Endothelial cell of umbilical vein (primary cell): ENCODE measurements at regions of chr11 and their contacts with region 1.

Region 1: GRCh38 chr11:125345421-125346178 is 150.5 kb downstream of the FEZ1 start:
- DNase-seq: peak; percentile 67
- H3K4me3 ChIP-seq: no peak overlapping the region
- H3K27ac ChIP-seq: no peak overlapping the region
- H3K4me1 ChIP-seq: no peaks in the 10 kb centered on the region
- H3K27me3 ChIP-seq: no peaks in the 10 kb centered on the region
- CTCF ChIP-seq: peak; percentile 84 to 90
- POLR2A ChIP-seq: no peak

Region 2: GRCh38 chr11:125141686-125142535 is 203.7 kb before region 1 on chr11:
- CTCF ChIA-PET with region 1: interaction called, 45 read pairs
- POLR2A ChIA-PET with region 1: no interaction called
- dilution Hi-C with region 1: no loop called
- intact Hi-C with region 1: loop called (anchors 1 kb)
- DNase-seq: peak; percentile 52
- H3K4me3 ChIP-seq: no peak overlapping the region
- H3K27ac ChIP-seq: no peak overlapping the region
- H3K4me1 ChIP-seq: no peaks in the 10 kb centered on the region
- H3K27me3 ChIP-seq: peaks cover 0 to 10% of the 10 kb centered on the region in 2 experiments
- CTCF ChIP-seq: peak; percentile 90 to 95
- POLR2A ChIP-seq: no peak

Region 3: GRCh38 chr11:125201525-125202141 is 144.0 kb before region 1 on chr11:
- CTCF ChIA-PET with region 1: interaction called, 10 read pairs
- POLR2A ChIA-PET with region 1: no interaction called
- dilution Hi-C with region 1: no loop called
- intact Hi-C with region 1: no loop called
- DNase-seq: peak; percentile 90
- H3K4me3 ChIP-seq: no peak overlapping the region
- H3K27ac ChIP-seq: no peak overlapping the region
- H3K4me1 ChIP-seq: no peaks in the 10 kb centered on the region
- H3K27me3 ChIP-seq: peaks cover 0 to 15% of the 10 kb centered on the region in 2 experiments
- CTCF ChIP-seq: no peak
- POLR2A ChIP-seq: no peak

Region 4: DNA sequence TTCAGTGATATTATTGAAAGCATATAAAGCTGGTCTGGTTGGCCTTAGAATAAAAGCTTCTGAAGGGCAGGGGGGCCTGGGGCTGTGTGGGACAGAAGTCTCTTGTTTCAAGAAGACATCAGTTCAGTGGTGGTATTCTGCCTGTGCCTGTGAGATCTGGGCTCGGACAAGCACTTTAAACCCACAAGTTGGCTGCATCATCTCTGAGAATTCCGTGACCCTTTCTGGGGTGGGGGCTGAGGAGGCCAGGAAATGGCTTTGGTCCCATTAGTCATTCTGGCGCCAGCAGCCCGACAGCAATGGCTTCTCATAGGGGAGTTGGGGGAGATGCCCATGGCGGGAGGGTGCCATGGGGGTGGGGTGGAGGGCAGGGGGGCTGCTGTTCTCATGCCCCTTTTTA is 77.0 kb before region 1 on chr11:
- CTCF ChIA-PET with region 1: interaction called, 14 read pairs
- POLR2A ChIA-PET with region 1: no interaction called
- dilution Hi-C with region 1: no loop called
- intact Hi-C with region 1: loop called (anchors 5 kb)
- DNase-seq: no peak
- H3K4me3 ChIP-seq: no peak overlapping the region
- H3K27ac ChIP-seq: no peak overlapping the region
- H3K4me1 ChIP-seq: no peaks in the 10 kb centered on the region
- H3K27me3 ChIP-seq: peaks cover 4 to 10% of the 10 kb centered on the region in 2 experiments
- CTCF ChIP-seq: no peak
- POLR2A ChIP-seq: no peak

Region 5: GRCh38 chr11:125329786-125330185 is 15.8 kb before region 1 on chr11:
- CTCF ChIA-PET with region 1: interaction called, 67 read pairs
- POLR2A ChIA-PET with region 1: no interaction called
- dilution Hi-C with region 1: no loop called
- intact Hi-C with region 1: no loop called
- DNase-seq: no peak
- H3K4me3 ChIP-seq: no peak overlapping the region
- H3K27ac ChIP-seq: no peak overlapping the region
- H3K4me1 ChIP-seq: no peaks in the 10 kb centered on the region
- H3K27me3 ChIP-seq: peaks cover 3 to 27% of the 10 kb centered on the region in 2 experiments
- CTCF ChIP-seq: no peak
- POLR2A ChIP-seq: no peak

Region 6: GRCh38 chr11:125404776-125405435 is 59.3 kb after region 1 on chr11:
- CTCF ChIA-PET with region 1: interaction called, 48 read pairs
- POLR2A ChIA-PET with region 1: no interaction called
- dilution Hi-C with region 1: no loop called
- intact Hi-C with region 1: loop called (anchors 1 kb)
- DNase-seq: peak; percentile 47
- H3K4me3 ChIP-seq: no peak overlapping the region
- H3K27ac ChIP-seq: no peak overlapping the region
- H3K4me1 ChIP-seq: peaks cover 4% of the 10 kb centered on the region
- H3K27me3 ChIP-seq: peaks cover 9 to 12% of the 10 kb centered on the region in 2 experiments
- CTCF ChIP-seq: peak; percentile 79 to 99
- POLR2A ChIP-seq: no peak